ENCODE measurements at regions of chr4 and their contacts with region 1.

Region 1: GRCh38 chr4:5998333-5998936 is 19.8 kb downstream of the C4orf50 start:
- DNase-seq: no peak
- ATAC-seq: peak; percentile 79

Region 2: DNA sequence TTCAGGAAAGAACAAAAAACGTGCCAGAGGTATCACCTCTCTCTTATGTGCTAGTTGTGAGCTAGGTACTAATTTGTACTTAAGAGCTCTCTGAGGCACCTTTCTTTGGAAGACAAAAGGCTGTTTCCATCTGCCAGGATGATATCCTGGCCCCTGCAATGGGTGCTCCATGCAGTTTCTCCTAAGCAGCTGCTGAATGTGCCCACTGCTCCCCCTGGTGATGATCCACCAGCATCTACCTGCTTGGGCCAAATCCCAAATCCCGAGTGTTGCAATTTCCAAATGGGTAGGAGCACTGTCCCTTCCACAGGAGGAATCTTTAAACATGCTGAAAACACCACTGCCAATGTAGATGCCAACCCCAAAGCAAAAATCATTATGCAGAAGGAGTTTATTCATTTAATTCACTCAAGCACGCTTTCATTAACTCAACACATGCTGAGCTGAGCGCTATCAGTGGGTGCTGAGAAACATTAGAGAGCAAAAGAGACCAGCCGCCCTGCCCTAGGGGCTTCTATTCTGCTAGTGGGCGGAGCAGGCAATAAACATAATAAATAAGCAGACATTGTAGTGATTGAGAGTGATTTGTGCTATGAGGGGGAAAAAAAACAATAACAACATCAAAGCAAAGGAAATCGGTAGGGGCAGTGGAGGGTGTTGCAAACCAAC is 89.4 kb after region 1 on chr4:
- intact Hi-C with region 1: loop called (anchors 5 kb)
- DNase-seq: no peak
- ATAC-seq: peak; percentile 55

Region 3: DNA sequence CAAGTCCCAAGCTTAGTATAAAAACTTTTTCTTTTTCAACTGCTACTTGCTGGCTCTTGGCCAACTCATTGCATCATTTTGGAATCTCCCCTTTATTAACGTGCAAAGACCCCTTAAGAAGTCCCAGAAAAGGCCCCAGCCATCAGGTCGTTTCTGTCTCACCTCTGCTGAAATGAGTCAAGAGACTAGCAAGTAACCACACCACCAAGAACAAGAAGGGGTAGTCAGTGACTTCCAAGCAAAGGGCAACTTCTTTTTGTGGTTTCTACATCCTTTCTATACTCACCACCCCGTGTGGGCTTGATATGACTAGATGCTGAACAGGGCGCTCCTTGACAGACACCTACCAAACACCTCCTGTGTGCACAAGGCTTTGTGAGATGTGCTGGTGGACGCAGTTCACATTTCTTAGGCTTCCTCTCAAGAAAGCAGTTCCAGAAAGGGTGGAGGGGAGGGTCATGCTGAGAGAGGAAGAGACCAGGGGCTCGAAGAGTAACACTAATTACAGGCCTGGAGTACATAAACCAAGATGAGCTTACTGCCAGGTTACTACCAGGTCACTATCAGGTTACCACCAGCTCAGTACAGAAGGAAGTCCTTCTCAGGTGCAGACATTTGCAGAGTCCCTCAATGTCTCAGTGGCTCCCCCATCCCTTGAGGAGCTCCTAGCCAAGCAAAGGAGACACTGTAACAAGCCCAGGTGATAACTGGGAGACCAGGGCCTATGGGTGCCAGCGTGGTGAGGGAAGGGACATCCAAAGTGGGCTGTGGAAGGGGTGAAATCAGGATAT is 182.6 kb after region 1 on chr4:
- intact Hi-C with region 1: no loop called
- DNase-seq: no peak
- ATAC-seq: no peak

Measured in Right ventricle myocardium superior (tissue), 1 donor.